ENCODE measurements at regions of chr1 and their contacts with region 1.

Region 1: DNA sequence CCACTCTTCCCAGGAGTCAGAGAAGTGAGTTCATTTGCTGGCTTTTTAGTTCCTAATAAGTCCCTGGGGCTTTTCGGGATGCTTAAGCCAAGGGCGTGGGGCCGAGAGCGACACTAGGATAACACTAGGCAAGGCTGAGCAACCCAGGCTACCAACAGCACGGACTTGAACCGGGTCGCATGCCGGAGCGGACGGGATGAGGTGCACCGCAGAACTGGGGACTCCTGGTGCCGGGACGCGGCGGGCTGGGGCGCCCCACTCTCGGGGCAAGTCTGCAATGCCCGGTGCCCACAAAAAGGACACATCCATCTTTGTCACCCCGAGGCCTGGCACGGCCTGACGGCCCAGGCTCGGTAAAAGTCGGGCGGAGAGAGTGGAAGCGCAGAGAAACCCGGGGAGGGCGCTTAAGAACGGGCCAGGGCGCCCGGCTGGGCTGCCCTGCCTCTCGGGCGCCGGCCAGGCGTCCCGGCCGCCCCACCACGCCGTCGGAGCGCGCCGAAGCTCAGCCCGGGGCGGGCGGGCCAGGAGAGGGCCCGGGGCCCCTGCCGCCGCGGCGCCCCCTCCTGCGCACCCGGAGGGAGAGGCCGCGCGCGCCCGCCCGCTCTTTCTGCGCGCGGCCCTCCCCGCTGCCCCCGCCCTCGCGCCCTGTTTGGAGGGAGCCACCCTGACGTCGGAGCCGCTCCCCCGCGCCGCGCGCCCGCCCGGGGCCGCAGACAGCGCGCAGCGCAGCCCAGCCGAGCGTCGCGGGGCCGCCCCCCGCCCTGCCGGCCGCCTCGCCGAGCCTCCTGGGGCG is at the start of gene NBL1:
- DNase-seq: peak in 2 of 4 donors; percentile 76 to 88
- ATAC-seq: peak; percentile 64
- H3K4me3 ChIP-seq: peak within 1 kb of the TSS; percentile 50 to 55
- H3K27ac ChIP-seq: peak within 1 kb of the TSS; percentile 68 to 86
- H3K4me1 ChIP-seq: peaks cover 0 to 37% of the 10 kb centered on the region in 2 donors
- H3K27me3 ChIP-seq: peaks cover 6 to 78% of the 10 kb centered on the region in 2 donors
- CTCF ChIP-seq: no peak
- polyA plus RNA-seq, gene NBL1: 69.1 to 90.6 (median 88.7) TPM

Region 2: DNA sequence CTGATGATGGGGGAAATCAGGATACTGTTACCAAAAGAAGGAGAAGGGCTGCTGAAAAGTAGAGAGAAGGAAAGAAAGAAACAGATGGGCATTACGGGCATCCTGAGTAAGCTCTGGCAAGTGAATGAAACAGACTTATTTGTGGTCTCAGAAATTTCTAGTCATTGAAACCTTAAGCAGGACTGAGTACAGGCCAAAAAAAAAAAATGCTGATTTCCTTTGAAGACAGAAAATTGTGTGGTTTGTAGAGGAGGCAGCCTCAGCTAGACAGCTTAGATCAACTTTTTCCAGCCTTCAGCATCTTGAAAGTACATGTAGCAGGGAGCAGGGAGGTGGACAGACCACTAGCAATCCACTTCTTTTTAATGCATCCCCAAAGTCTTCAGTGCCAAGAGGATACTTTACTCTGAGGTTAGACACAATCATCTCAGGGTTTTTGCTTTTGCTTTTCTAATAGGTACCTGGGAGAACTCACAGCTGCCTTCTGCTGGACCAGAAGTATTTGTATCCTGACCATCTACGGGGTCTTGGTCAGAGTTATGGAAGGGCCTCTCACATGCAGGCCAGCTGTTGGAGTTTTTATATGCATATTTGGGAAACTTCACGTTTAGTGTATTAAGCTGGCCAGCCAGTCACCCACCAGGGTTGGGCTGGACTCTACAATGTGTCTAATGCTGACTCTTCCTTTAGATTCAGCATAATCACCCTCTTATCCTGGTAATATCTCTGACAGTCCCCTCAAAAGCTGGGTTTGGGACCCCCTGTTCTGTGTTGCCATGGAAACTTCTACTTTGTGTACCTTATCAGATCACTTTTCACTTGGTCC is 147.8 kb before region 1 on chr1:
- intact Hi-C with region 1: loop called in 1 of 2 experiments (anchors 10 kb)
- DNase-seq: peak in 2 of 4 donors; percentile 47 to 71
- ATAC-seq: peak; percentile 45
- H3K4me3 ChIP-seq: no peak overlapping the region
- H3K27ac ChIP-seq: peak overlapping the region in 1 of 2 donors; percentile 72
- H3K4me1 ChIP-seq: peaks cover 0 to 12% of the 10 kb centered on the region in 2 donors
- H3K27me3 ChIP-seq: no peaks in the 10 kb centered on the region
- CTCF ChIP-seq: no peak

Measured in left lung (tissue), 14 donors.